ENCODE measurements at regions of chr6 and their contacts with region 1.

Region 1: DNA sequence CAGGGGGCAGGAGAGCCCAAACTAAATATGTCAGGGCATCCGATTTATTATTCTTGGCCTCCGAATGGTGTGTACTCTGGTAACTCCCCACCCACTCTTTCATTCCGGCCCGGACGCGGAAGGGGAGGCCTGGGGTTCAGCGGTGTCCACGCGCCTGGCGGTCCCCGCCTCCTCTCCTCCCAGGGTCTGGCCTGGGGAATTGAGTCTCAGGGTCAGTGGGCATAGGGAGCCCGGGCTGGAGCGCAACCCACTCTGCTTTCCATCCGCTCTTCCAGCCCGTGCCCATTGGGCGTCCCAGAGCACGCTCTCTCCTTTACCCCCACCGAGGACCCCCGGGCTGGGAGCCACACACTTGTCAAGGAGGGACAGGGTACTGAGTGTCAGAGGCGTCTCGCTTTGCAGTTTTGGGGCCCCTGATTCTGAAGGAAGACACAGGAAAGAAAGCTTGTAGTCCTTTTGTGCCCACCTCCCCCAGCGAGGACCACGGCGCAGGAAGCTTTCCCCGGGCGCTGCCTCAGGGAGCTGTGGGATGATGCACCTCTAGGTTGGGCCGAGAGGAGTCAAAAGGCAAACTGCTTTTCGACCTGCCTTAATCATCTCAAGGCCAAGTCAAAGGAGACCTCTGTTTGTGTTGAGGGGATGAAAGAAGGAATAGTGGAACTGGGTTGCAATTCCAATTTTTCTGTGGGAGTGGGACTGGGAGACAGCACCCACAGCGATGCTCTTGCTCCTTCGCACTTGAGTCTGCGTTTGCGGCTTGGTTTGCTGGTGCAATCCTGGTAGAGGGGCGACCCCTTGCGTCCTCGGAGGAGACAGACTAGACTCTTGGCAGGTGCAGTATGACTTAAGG is 2.5 kb downstream of the RSPO3 start:
- DNase-seq: peak in 1 of 2 donors; percentile 96
- H3K4me3 ChIP-seq: peak overlapping the region; percentile 42 to 70
- H3K27ac ChIP-seq: no peak overlapping the region
- H3K4me1 ChIP-seq: peaks cover 32% of the 10 kb centered on the region
- H3K27me3 ChIP-seq: no peaks in the 10 kb centered on the region
- CTCF ChIP-seq: peak in 2 of 3 experiments; percentile 10 to 58
- POLR2A ChIP-seq: no peak

Region 2: DNA sequence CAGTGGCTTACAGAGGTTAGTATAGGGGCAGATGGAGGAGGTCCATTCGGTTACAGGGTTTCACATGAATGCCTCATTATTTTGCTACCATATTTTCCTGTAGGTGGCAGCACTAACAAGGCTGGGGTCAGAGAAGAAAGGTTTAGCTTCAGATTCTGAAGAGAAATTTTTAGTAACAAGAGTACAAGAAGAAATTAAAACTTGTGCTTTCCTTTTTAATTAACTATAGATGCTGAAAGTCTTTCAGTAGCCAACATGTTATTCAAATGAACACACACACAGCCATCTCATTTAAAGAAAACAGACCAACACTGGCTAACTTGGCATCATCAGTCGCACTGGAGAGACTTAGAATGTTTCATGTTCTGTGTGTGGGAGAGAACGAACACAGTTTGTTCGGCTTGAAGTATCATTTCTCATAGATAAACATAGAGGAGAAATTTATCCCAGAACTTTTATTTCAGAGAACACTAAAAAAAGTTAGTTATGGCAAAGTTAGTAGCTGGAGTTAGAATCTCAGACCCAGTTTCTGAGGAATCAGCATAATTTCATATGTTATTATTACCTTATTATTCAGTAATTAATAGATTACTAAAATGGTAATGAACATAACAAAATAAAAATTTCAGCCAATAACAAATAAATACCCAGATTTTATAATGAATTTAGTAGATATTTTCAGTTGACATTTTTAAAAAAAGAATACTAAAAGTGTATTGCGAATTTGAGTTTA is 316.5 kb before region 1 on chr6:
- intact Hi-C with region 1: loop called (anchors 10 kb)
- DNase-seq: no peak
- H3K4me3 ChIP-seq: no peak overlapping the region
- H3K27ac ChIP-seq: no peak overlapping the region
- H3K4me1 ChIP-seq: no peaks in the 10 kb centered on the region
- H3K27me3 ChIP-seq: no peaks in the 10 kb centered on the region
- CTCF ChIP-seq: peak in 2 of 3 experiments; percentile 45 to 55
- POLR2A ChIP-seq: no peak

Region 3: GRCh38 chr6:127083963-127084310 is 37.1 kb before region 1 on chr6:
- intact Hi-C with region 1: loop called (anchors 1 kb)
- DNase-seq: no peak
- H3K4me3 ChIP-seq: no peak overlapping the region
- H3K27ac ChIP-seq: no peak overlapping the region
- H3K4me1 ChIP-seq: no peaks in the 10 kb centered on the region
- H3K27me3 ChIP-seq: no peaks in the 10 kb centered on the region
- CTCF ChIP-seq: no peak
- POLR2A ChIP-seq: no peak

Region 4: DNA sequence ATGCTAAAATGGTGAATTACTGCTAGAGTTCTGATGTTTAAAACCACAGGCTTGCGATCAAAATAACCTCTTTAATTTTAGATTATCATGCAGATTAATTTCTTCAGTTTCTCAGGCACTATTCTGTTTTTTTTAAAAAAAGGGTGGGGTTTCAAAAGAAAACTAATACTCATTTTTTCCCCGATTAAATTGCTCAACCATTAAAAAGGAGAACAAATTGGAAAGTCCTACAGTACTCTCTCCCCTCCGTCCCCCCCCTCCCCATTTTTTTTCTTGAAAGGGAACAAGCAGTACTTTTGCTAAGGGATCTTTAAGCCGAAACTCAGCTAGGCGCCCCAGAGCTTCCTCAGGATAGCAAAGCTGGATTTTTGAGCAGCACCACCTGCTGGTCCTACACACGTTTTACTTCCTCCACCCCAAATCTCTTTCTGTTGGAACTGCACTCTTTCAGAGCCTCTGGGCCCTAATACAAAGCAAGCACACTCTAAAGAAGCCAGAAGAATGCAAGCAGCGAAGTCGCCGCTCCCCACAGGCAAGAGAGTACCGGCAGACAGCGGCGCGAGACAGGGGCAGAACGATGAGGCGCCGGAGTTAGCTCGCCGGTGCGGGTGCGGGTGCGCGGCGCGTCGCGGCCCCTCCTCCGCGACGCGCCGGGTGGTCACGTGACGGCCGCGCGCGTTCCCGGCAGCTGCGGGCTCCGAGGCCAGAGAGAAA is 145.3 kb after region 1 on chr6 and contains the start of gene RNF146:
- intact Hi-C with region 1: loop called (anchors 10 kb)
- DNase-seq: peak in 1 of 2 donors; percentile 93
- H3K4me3 ChIP-seq: peak within 1 kb of the TSS; percentile 95 to 97
- H3K27ac ChIP-seq: peak within 1 kb of the TSS; percentile 99
- H3K4me1 ChIP-seq: peaks cover 34% of the 10 kb centered on the region
- H3K27me3 ChIP-seq: no peaks in the 10 kb centered on the region
- CTCF ChIP-seq: peak; percentile 41 to 78 (median 63)
- POLR2A ChIP-seq: no peak
- total RNA-seq, gene RNF146: 53.0 TPM